Breast epithelium (tissue), 4 donors: ENCODE measurements at regions of chr4 and their contacts with region 1.

Region 1: GRCh38 chr4:177879851-177880250 is 437.6 kb upstream of the AGA start:
- DNase-seq: no peak
- H3K4me3 ChIP-seq: no peak overlapping the region
- H3K27ac ChIP-seq: no peak overlapping the region
- H3K4me1 ChIP-seq: no peaks in the 10 kb centered on the region
- H3K27me3 ChIP-seq: no peaks in the 10 kb centered on the region
- CTCF ChIP-seq: no peak
- POLR2A ChIP-seq: no peak

Region 2: DNA sequence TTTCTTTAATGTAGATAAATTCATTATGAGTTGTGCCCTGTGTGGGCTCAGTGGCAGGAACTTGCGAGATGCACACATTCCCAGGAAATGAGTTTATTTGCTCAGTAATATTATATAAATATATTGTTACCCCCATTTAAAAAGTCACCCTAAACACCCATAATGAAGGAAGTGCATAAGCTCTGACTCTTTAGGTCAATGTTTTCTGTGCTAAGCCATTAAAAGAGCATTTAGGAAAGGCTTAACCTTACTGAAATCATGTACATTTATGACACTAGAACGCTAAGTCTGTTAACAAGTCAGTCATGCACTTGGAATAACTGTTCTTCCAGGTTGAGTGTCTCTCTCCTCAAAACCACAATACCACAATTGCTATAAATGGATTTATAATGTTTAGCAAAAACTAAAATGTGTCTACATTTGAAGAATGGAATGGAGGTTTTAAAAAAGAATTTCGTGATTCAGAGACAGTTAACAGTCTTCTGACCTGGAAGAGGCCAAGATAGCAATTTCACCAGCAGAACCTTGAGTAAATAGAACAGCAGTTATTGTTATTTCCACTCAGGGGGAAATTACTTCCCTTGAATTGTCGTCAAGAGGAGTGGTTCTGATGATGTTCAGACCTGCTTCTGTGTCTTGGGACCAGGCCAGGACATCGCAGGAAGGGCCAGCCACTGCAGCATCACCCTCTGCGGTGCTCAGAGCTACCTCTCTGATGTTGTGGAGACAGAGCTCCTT is 996.0 kb before region 1 on chr4:
- intact Hi-C with region 1: loop called (anchors 10 kb)
- DNase-seq: no peak
- H3K4me3 ChIP-seq: no peak overlapping the region
- H3K27ac ChIP-seq: no peak overlapping the region
- H3K4me1 ChIP-seq: no peaks in the 10 kb centered on the region
- H3K27me3 ChIP-seq: no peaks in the 10 kb centered on the region
- CTCF ChIP-seq: no peak
- POLR2A ChIP-seq: no peak

Region 3: GRCh38 chr4:177862541-177863176 is 17.2 kb before region 1 on chr4:
- intact Hi-C with region 1: no loop called
- DNase-seq: no peak
- H3K4me3 ChIP-seq: no peak overlapping the region
- H3K27ac ChIP-seq: no peak overlapping the region
- H3K4me1 ChIP-seq: no peaks in the 10 kb centered on the region
- H3K27me3 ChIP-seq: no peaks in the 10 kb centered on the region
- CTCF ChIP-seq: no peak
- POLR2A ChIP-seq: no peak